Posterior cingulate gyrus (tissue), 11 donors: ENCODE measurements at regions of chr16 and their contacts with region 1.

Region 1: GRCh38 chr16:84062734-84063640 is 20.4 kb upstream of the SLC38A8 start:
- DNase-seq: peak; percentile 68 to 97 (median 85)

Region 2: DNA sequence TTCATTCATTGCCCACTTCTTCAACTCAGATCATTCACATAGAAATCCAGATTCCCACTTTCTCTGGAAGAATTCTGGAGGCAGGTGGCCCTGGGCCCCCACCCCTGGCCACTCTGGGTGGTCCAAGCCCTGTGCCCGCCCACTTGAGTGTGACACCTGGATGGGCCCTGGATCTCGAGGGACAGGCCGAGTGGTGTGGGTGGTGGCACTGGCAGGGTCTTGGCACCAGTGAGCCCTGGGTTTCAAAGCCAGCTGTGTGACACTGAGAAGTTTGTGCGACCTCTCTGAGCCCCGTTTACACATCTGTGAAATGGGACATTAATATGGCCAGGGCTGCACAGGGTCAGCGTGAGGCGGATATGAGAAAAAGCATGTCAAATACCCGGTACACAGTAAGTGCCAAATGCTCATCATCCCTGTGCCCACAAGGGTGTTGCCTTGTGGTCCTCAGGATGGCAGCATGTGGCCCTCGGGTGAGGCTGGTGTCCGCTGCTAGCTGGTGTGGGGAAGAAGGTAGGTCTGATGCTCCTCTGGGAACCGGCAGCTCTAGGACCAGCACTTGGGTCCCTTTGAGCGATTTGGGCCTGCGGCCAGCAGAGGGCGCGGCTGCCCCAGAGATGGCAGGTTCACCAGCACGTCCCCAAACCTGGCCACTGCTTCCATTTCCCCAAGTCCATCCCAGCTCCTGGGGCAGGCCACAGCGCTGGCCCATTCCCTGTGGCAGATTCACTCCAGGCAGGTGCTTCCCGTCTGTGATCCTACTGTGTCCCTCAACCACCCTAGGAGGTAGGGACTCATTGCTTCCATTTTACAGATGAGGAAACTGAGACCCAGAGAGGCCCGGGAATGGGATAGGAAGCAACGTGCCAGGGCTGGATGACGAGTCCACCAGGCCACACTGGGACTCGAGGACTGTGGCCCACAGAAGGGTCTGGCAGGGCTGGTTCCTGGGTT is 106.4 kb before region 1 on chr16:
- intact Hi-C with region 1: loop called (anchors 1 kb)
- DNase-seq: peak; percentile 71 to 98 (median 86)

Region 3: GRCh38 chr16:83967806-83968305 is 95.1 kb before region 1 on chr16 and contains the start of gene NECAB2:
- intact Hi-C with region 1: loop called (anchors 1 kb)
- DNase-seq: peak in 7 of 10 donors; percentile 46 to 92 (median 65)